A549 (cell line): ENCODE measurements at regions of chr11 and their contacts with region 1.

Region 1: DNA sequence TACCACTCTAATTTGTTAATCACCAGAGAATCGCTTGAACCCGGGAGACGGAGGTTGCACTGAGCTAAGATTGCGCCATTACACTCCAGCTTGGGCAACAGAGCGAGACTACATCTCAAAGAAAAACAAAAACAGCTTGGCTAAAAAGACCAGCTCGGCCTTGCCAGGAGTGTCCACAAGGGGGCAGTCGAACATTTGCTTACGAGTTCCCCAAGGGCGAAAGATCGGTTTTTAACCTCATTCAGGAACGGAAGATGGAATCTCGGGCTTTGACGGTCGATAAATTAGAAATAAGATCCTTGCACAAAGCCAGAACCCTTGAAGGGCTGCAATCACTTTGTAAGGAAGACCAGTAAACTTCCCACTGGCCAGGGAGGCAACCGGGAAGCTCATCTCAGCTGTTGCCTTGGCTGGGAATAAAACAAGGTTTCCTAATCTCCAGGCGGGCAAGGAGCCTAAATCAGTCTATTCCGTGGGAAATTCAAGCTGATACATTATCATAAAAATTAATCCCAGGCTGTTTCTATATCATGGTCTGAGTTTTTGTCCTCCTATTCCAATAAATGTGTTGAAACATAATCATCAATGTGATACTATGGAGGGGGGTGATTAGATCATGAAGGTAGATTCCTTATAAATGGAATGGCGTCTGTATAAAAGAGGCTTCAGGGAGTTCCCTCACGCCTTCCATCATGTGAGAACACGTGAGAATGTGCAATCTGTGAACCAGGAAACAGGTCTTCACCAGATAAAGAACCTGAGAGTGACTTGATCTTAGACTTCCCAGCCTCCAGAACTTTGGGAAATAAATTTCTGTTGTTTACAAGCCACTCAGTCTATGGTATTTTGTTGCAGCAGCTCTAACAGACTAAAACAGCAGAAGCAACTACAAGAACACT is 14.9 kb upstream of the SLC29A2 start:
- DNase-seq: peak; percentile 41 to 89
- ATAC-seq: peak; percentile 72 to 84
- H3K4me3 ChIP-seq: peak overlapping the region; percentile 27; the same call in 2 of the 3 replicates
- H3K27ac ChIP-seq: peak overlapping the region in 1 of 2 experiments; percentile 44; a peak in 2 of 6 replicates
- H3K4me1 ChIP-seq: 0 out of 3 replicates have a peak, but pooled peaks cover 3% of the 10 kb centered on the region
- CTCF ChIP-seq: peak; percentile 93
- EP300 ChIP-seq: no peak
- POLR2A ChIP-seq: no peak
- RAD21 ChIP-seq: peak; percentile 65 to 76; a peak in 4 of 5 replicates

Region 2: GRCh38 chr11:66216911-66217310 is 169.5 kb before region 1 on chr11:
- CTCF ChIA-PET with region 1: no interaction called
- POLR2A ChIA-PET with region 1: no interaction called
- DNase-seq: no peak
- ATAC-seq: no peak
- H3K4me3 ChIP-seq: no peak overlapping the region
- H3K27ac ChIP-seq: no peak overlapping the region
- H3K4me1 ChIP-seq: peaks cover 3% of the 10 kb centered on the region; the same call in 1 of the 3 replicates
- CTCF ChIP-seq: no peak
- EP300 ChIP-seq: no peak
- POLR2A ChIP-seq: no peak
- RAD21 ChIP-seq: no peak

Region 3: GRCh38 chr11:66336234-66337102 is 50.0 kb before region 1 on chr11 and contains the start of gene RIN1:
- CTCF ChIA-PET with region 1: interaction called, 14 read pairs
- POLR2A ChIA-PET with region 1: no interaction called
- DNase-seq: peak; percentile 86 to 93
- ATAC-seq: peak; percentile 74 to 86
- H3K4me3 ChIP-seq: peak within 1 kb of the TSS; percentile 56
- H3K27ac ChIP-seq: peak within 1 kb of the TSS; percentile 83 to 97
- H3K4me1 ChIP-seq: peaks cover 26% of the 10 kb centered on the region
- CTCF ChIP-seq: peak; percentile 53
- EP300 ChIP-seq: no peak
- POLR2A ChIP-seq: peak; percentile 34
- RAD21 ChIP-seq: peak; percentile 63 to 74; a peak in 4 of 5 replicates
- polyA plus RNA-seq, gene RIN1: 2.0 and 2.3 TPM in 2 replicates

Region 4: GRCh38 chr11:66344550-66345315 is 41.7 kb before region 1 on chr11 and contains the start of gene BRMS1:
- CTCF ChIA-PET with region 1: interaction called, 19 read pairs
- POLR2A ChIA-PET with region 1: interaction called, 3 read pairs
- DNase-seq: peak; percentile 94 to 98
- ATAC-seq: peak; percentile 66 to 85
- H3K4me3 ChIP-seq: peak within 1 kb of the TSS; percentile 88
- H3K27ac ChIP-seq: peak within 1 kb of the TSS; percentile 77 to 93
- H3K4me1 ChIP-seq: peaks cover 32% of the 10 kb centered on the region
- CTCF ChIP-seq: no peak
- EP300 ChIP-seq: no peak
- POLR2A ChIP-seq: peak; percentile 97
- RAD21 ChIP-seq: no peak
- polyA plus RNA-seq, gene BRMS1: 47.4 and 56.2 TPM in 2 replicates

Region 5: DNA sequence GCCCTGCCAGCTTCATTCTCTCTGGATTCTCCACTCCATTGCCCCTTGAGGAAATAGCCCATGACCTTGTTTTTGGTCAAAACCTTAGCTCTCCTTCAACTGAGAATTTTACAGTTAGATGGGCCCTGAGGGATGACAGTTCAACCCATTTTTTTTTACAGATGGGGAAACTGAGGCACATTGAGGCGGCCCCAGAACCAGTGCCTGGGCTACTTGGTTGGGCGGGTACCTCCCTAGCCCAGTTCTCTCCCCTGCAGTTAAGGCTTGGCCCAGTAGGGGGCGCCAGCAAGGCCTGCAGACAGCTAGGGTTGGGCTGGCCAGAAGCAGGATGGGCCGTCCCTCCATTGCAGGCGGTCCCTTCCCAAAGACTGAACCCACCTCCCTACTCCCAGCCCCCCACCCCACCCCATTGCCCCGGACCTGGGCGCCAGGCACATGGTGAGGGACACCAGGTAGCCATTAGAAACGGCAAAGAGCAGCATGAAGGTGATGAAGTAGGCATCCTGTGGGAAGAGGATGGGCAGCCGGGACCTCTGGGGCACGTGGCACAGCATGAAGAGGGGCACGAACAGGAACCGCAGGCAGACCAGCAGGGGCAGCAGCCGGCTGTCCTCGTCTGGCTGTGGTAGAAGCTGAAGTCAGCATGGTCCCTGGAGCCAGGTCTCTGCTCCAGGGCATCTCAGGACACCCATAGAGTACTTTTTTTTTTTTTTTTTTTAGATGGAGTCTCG is 22.4 kb before region 1 on chr11:
- CTCF ChIA-PET with region 1: interaction called, 31 read pairs
- POLR2A ChIA-PET with region 1: no interaction called
- DNase-seq: peak; percentile 59 to 64
- ATAC-seq: peak; percentile 44 to 75; a peak in 4 of 6 replicates
- H3K4me3 ChIP-seq: no peak overlapping the region
- H3K27ac ChIP-seq: no peak overlapping the region
- H3K4me1 ChIP-seq: no peaks in the 10 kb centered on the region
- CTCF ChIP-seq: peak; percentile 58
- EP300 ChIP-seq: no peak
- POLR2A ChIP-seq: no peak
- RAD21 ChIP-seq: no peak

Region 6: GRCh38 chr11:66371627-66372415 is 14.6 kb before region 1 on chr11 and contains the start of gene SLC29A2:
- CTCF ChIA-PET with region 1: interaction called, 31 read pairs
- POLR2A ChIA-PET with region 1: no interaction called
- DNase-seq: peak; percentile 40 to 68
- ATAC-seq: peak; percentile 74 to 83
- H3K4me3 ChIP-seq: peak within 1 kb of the TSS; percentile 98
- H3K27ac ChIP-seq: peak within 1 kb of the TSS; percentile 84 to 85
- H3K4me1 ChIP-seq: peaks cover 17% of the 10 kb centered on the region; the same call in 1 of the 3 replicates
- CTCF ChIP-seq: no peak
- EP300 ChIP-seq: no peak
- POLR2A ChIP-seq: no peak
- RAD21 ChIP-seq: no peak
- polyA plus RNA-seq, gene SLC29A2: 2.6 and 3.9 TPM in 2 replicates

Region 7: DNA sequence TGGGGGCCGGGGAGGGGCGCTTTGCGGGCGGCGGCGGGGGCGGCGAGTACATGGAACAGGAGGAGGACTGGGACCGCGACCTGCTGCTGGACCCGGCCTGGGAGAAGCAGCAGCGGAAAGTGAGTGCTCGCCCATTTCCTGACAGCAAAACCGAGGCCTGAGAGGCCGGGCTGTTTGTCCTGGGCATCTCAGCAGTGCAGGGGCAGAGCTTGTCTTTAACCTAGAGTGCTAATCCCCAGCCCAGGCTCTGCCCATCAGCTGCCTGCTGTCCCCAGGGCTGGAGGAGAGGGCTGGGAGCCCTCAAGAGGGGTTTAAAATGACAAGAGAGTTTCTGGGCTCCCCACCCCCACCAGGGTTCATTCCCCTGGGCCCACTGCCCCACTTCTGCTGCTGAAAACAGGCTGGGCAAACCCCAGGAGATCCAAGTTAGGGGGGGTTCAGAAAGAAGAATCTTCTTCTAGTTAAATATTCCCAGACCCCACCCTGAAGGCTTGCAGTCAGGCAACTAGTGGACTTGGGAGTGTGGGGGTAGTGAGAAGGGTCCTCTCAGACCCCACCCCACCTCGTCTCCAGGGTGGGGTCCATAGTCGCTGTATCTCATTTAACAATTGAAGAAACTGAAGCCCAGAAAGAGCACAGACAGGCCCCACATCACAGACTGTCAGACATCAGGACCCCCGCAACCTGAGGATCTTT is 160.7 kb after region 1 on chr11:
- CTCF ChIA-PET with region 1: no interaction called
- POLR2A ChIA-PET with region 1: no interaction called
- DNase-seq: no peak
- ATAC-seq: no peak
- H3K4me3 ChIP-seq: peak overlapping the region; percentile 85; the same call in 2 of the 3 replicates
- H3K27ac ChIP-seq: peak overlapping the region in 1 of 2 experiments; percentile 96; a peak in 4 of 6 replicates
- H3K4me1 ChIP-seq: peaks cover 17% of the 10 kb centered on the region
- CTCF ChIP-seq: no peak
- EP300 ChIP-seq: no peak
- POLR2A ChIP-seq: no peak
- RAD21 ChIP-seq: no peak